ENCODE measurements at regions of chr10 and their contacts with region 1.

Region 1: GRCh38 chr10:122062831-122063674 is 74.1 kb downstream of the TACC2 start:
- DNase-seq: peak; percentile 97
- H3K4me3 Mint-ChIP-seq: peak overlapping the region; percentile 20
- H3K27ac Mint-ChIP-seq: peak overlapping the region; percentile 98
- H3K4me1 Mint-ChIP-seq: peaks cover 12% of the 10 kb centered on the region
- H3K27me3 Mint-ChIP-seq: no peaks in the 10 kb centered on the region
- CTCF ChIP-seq: no peak

Region 2: DNA sequence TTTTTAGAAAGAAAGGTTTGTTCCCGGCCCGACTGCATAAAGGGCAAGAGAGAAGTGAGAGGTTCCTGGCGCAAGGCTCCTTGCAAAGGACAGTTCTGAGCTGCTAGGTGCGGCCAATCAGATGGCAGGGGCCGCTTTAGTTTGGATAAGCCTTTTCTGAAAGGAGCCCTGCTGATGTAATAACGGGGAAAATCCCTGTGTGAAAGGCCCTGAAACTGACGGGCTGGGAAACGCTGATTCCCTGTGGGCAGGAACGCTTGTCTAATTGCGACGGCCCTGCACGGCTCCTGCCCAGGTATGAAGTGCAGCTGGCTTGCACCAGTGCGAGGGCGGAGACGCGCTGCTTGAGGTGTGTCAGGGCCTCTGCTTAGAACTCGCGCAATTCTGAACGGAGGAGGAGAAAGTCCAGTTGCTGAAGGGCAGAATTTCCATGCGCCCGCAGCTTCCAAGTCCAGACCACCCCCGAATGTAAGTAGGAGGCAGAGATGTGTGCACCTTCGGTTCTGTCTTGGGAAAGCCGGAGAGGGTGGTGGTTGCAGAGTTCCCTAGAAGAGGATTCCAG is 43.6 kb before region 1 on chr10:
- CTCF ChIA-PET with region 1: no interaction called
- POLR2A ChIA-PET with region 1: interaction called, 12 read pairs
- intact Hi-C with region 1: no loop called
- DNase-seq: peak; percentile 81
- H3K4me3 Mint-ChIP-seq: peak overlapping the region; percentile 68
- H3K27ac Mint-ChIP-seq: peak overlapping the region; percentile 86
- H3K4me1 Mint-ChIP-seq: peaks cover 21% of the 10 kb centered on the region
- H3K27me3 Mint-ChIP-seq: no peaks in the 10 kb centered on the region
- CTCF ChIP-seq: no peak

Region 3: DNA sequence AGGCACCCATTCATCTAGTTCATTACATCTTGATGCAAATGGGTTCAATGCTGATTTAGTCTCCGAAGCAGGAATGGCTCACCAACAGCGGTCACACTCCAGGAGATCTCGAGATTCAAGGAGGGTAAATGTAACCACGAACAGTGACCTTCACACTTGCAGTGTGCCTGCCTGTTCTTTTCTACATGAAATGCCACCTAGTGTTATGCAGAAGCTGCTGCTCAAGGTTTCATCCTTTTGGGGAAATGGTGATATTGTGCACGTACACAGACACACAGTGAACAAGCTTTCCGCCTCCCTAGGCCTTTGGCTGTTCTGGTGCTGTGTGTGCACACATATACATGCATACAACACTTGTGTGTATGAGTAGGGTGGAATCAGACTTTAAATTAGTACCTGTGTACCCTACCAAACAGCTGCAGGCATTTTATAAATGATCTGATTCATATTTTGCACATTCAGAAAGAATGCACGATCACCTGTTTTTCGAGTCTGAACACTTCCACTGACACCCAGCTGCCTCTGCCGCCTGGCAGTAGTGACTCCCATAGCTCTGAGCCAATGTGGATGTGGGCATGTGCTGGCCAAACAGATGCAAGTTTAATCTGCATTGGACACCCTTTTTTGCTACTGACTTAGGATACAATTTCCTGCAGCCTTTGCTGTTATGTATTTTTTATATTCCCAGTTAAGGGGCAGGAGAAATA is 26.4 kb after region 1 on chr10:
- CTCF ChIA-PET with region 1: interaction called, 7 read pairs
- POLR2A ChIA-PET with region 1: interaction called, 69 read pairs
- intact Hi-C with region 1: no loop called
- DNase-seq: peak; percentile 52
- H3K4me3 Mint-ChIP-seq: no peak overlapping the region
- H3K27ac Mint-ChIP-seq: peak overlapping the region; percentile 51
- H3K4me1 Mint-ChIP-seq: peaks cover 19% of the 10 kb centered on the region
- H3K27me3 Mint-ChIP-seq: no peaks in the 10 kb centered on the region
- CTCF ChIP-seq: peak; percentile 14

Region 4: GRCh38 chr10:122098924-122099323 is 35.9 kb after region 1 on chr10:
- CTCF ChIA-PET with region 1: interaction called, 5 read pairs
- POLR2A ChIA-PET with region 1: interaction called, 13 read pairs
- intact Hi-C with region 1: no loop called
- DNase-seq: no peak
- H3K4me3 Mint-ChIP-seq: no peak overlapping the region
- H3K27ac Mint-ChIP-seq: no peak overlapping the region
- H3K4me1 Mint-ChIP-seq: peaks cover 16% of the 10 kb centered on the region
- H3K27me3 Mint-ChIP-seq: no peaks in the 10 kb centered on the region
- CTCF ChIP-seq: no peak